Activated CD4-positive, alpha-beta T cell treated with anti-CD3 and anti-CD28 coated beads for 36 hours (primary cell): ENCODE measurements at regions of chr6 and their contacts with region 1.

Region 1: DNA sequence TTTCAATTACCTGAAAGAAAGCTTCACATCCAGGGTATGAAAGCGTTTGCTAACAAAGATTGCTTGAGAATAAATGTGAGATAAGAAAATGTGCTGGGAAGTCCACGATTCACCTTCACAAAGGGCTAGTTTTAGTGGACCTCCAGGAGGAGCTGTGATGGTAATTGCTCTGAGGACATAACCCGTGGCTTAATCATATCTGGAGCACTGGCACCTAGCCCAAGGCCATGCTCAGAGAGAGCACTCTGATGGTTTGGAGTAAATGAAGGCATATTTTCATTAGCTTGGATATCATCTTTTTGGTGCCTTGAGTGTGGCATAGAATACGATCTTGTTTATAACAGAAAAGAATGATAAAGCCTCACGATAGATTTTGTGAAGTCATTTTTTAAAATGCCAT is 46.9 kb upstream of the BACH2 start:
- DNase-seq: no peak
- ATAC-seq: no peak
- H3K4me3 Mint-ChIP-seq: no peak overlapping the region
- H3K27ac Mint-ChIP-seq: no peak overlapping the region
- H3K4me1 Mint-ChIP-seq: peaks cover 19% of the 10 kb centered on the region
- H3K27me3 Mint-ChIP-seq: no peaks in the 10 kb centered on the region

Region 2: DNA sequence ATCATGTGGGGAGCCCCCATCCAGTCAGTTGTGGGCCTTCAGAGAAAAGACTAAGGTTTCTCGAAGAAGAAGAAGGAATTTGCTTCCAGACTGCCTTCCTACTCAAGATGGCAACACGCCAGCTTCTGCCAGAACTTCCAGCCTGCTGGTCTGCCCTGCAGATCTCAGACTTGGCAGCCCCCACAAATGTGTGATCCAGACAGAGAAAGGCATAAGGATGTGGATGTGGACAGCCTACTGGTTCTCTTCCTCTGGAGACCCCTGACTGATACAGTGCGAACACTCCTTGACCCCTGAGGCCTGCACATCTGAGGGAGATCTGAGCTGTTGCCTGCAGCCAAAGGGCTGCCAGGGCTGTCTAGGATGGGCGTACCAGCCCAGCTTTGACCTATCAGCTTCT is 1135.0 kb before region 1 on chr6:
- CTCF ChIA-PET with region 1: no interaction called
- POLR2A ChIA-PET with region 1: interaction called, 10 read pairs
- intact Hi-C with region 1: no loop called
- DNase-seq: no peak
- ATAC-seq: no peak
- H3K4me3 Mint-ChIP-seq: no peak overlapping the region
- H3K27ac Mint-ChIP-seq: no peak overlapping the region
- H3K4me1 Mint-ChIP-seq: no peaks in the 10 kb centered on the region
- H3K27me3 Mint-ChIP-seq: peaks cover 4% of the 10 kb centered on the region

Region 3: DNA sequence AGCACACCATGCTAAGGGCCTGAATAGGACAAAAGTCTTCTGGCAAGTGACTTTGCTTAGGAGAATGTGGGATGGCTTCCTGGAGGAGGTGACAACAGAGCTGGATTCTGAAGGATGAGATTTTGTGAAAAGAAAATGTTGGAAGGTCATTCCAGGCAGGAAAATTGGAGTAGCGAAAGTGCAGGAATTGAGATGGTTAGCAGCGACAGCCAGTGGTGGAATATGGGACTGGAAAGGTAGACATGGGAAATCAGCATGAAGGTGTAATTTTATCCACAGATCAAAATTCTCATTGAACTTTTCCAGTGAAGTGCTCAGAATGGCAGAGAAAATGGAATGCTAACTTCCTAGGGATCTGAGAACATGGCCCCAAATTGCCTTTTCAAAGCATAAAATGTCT is 41.3 kb before region 1 on chr6:
- CTCF ChIA-PET with region 1: no interaction called
- POLR2A ChIA-PET with region 1: no interaction called
- intact Hi-C with region 1: no loop called
- DNase-seq: no peak
- ATAC-seq: no peak
- H3K4me3 Mint-ChIP-seq: no peak overlapping the region
- H3K27ac Mint-ChIP-seq: no peak overlapping the region
- H3K4me1 Mint-ChIP-seq: peaks cover 55% of the 10 kb centered on the region
- H3K27me3 Mint-ChIP-seq: peaks cover 20% of the 10 kb centered on the region